MCF 10A (cell line): ENCODE measurements at regions of chr4 and their contacts with region 1.

Region 1: DNA sequence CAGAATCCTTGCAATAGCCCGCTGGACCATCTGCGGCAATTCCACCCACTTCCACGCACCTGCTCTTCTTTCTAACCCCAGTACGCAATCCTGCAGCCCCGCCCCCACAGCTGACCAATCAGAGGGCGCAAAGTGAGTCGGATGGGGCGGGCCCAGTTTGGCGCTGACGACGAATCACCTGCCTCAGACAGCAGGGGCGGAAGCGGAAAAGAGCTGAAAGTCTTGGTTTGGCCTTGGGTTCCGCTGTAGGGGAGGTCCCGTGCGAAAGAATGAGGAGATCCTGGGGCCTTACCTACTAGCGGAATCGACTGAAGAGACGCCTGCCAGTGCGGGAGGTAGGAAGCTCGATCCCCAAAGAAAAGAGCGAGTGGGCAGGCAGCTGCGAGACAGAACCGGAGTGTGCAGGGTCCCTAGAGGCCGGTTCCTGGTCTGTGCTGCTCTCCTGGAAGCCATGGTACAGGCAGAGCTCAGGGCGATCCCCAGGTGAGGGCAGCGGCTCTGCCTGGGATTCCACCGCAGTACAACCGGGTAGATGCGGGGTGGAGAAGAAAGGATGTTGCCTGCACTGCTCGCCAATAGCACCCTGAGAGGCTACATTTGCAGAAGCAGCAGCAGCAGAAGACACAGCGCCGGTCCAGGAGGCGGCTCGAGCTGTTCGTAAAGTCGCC is at the start of gene TMEM184C:
- DNase-seq: peak; percentile 98
- H3K4me3 Mint-ChIP-seq: peak within 1 kb of the TSS; percentile 82
- H3K27ac Mint-ChIP-seq: peak within 1 kb of the TSS; percentile 86
- H3K4me1 Mint-ChIP-seq: peaks cover 18% of the 10 kb centered on the region
- H3K27me3 Mint-ChIP-seq: no peaks in the 10 kb centered on the region
- CTCF ChIP-seq: no peak
- total RNA-seq, gene TMEM184C: 33.9 and 37.1 TPM in 2 replicates

Region 2: DNA sequence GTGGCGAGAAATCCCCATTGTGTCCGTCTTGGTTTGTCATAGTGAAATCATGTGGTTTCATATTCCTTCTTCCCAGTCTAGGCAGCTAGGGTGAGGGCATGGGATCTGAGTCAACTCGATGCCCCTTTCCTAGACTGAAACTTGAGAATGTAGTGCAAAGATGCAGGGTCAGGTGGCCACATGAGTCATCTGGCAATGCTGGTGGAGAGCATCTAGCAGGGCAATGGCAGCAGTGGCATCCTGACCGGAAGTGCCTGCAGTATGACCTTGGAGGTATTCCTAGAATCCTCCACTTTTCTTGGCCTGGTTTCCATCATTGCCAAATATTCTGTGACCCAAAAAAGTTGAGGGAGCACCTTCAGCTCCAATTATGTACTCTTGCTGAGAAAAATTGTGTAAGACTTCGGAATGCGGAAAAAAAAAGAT is 39.2 kb before region 1 on chr4:
- CTCF ChIA-PET with region 1: no interaction called
- POLR2A ChIA-PET with region 1: interaction called, 12 read pairs
- intact Hi-C with region 1: no loop called
- DNase-seq: peak; percentile 99
- H3K4me3 Mint-ChIP-seq: peak overlapping the region; percentile 17
- H3K27ac Mint-ChIP-seq: peak overlapping the region; percentile 76
- H3K4me1 Mint-ChIP-seq: peaks cover 42% of the 10 kb centered on the region
- H3K27me3 Mint-ChIP-seq: no peaks in the 10 kb centered on the region
- CTCF ChIP-seq: no peak

Region 3: DNA sequence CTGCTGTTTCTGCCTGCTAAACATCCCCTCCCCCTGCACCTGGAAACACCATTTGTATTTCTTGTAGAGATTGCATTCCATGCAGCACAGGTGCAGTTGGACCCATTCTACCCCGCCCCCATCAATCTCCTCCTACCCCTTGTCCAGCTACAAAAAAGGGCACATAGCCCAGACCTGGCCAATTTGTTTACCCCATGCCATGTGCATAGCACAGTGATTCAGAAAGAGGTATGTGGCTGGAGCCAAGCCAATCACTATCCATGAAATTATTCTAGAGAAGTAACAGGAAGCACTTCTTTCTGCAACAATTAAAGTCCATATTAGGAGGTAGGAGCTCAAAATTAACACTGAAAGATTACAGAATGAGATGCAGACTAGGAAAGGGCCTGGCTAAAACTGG is 20.3 kb before region 1 on chr4:
- CTCF ChIA-PET with region 1: interaction called, 5 read pairs
- POLR2A ChIA-PET with region 1: interaction called, 51 read pairs
- intact Hi-C with region 1: no loop called
- DNase-seq: peak; percentile 94
- H3K4me3 Mint-ChIP-seq: no peak overlapping the region
- H3K27ac Mint-ChIP-seq: peak overlapping the region; percentile 97
- H3K4me1 Mint-ChIP-seq: peaks cover 35% of the 10 kb centered on the region
- H3K27me3 Mint-ChIP-seq: no peaks in the 10 kb centered on the region
- CTCF ChIP-seq: no peak

Region 4: GRCh38 chr4:147633113-147633512 is 15.8 kb after region 1 on chr4:
- CTCF ChIA-PET with region 1: no interaction called
- POLR2A ChIA-PET with region 1: interaction called, 31 read pairs
- intact Hi-C with region 1: no loop called
- DNase-seq: no peak
- H3K4me3 Mint-ChIP-seq: no peak overlapping the region
- H3K27ac Mint-ChIP-seq: peak overlapping the region; percentile 66
- H3K4me1 Mint-ChIP-seq: no peaks in the 10 kb centered on the region
- H3K27me3 Mint-ChIP-seq: no peaks in the 10 kb centered on the region
- CTCF ChIP-seq: no peak

Region 5: DNA sequence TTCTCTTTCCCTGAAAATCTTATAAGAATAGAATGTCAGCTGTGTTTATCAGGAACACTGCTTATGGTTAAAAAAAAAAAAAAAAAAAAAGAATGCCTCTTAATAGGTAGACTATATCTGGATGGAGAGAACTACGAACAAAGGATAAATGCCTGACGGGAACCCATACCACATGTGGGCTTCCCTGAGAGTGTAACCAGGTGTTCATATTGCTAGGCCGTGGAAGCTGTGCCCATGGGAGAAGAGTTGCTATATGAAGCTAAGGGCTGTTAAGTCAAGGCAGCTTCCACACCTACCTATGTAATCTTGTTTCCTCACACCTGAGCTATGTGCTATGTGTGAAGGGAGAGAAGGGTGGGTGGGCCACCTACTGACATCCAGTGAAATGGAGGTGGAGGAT is 27.2 kb after region 1 on chr4:
- CTCF ChIA-PET with region 1: interaction called, 3 read pairs
- POLR2A ChIA-PET with region 1: interaction called, 10 read pairs
- intact Hi-C with region 1: no loop called
- DNase-seq: no peak
- H3K4me3 Mint-ChIP-seq: no peak overlapping the region
- H3K27ac Mint-ChIP-seq: no peak overlapping the region
- H3K4me1 Mint-ChIP-seq: peaks cover 10% of the 10 kb centered on the region
- H3K27me3 Mint-ChIP-seq: no peaks in the 10 kb centered on the region
- CTCF ChIP-seq: no peak

Region 6: GRCh38 chr4:147683717-147684700 is 66.7 kb after region 1 on chr4 and contains the start of gene PRMT9:
- CTCF ChIA-PET with region 1: no interaction called
- POLR2A ChIA-PET with region 1: interaction called, 48 read pairs
- intact Hi-C with region 1: no loop called
- DNase-seq: peak; percentile 87
- H3K4me3 Mint-ChIP-seq: peak within 1 kb of the TSS; percentile 88
- H3K27ac Mint-ChIP-seq: peak within 1 kb of the TSS; percentile 89
- H3K4me1 Mint-ChIP-seq: peaks cover 11% of the 10 kb centered on the region
- H3K27me3 Mint-ChIP-seq: no peaks in the 10 kb centered on the region
- CTCF ChIP-seq: no peak
- total RNA-seq, gene PRMT9: 6.1 and 8.4 TPM in 2 replicates

Region 7: GRCh38 chr4:147822128-147822527 is 204.8 kb after region 1 on chr4:
- CTCF ChIA-PET with region 1: no interaction called
- POLR2A ChIA-PET with region 1: interaction called, 10 read pairs
- intact Hi-C with region 1: no loop called
- DNase-seq: peak; percentile 99
- H3K4me3 Mint-ChIP-seq: peak overlapping the region; percentile 54
- H3K27ac Mint-ChIP-seq: peak overlapping the region; percentile 81
- H3K4me1 Mint-ChIP-seq: peaks cover 53% of the 10 kb centered on the region
- H3K27me3 Mint-ChIP-seq: no peaks in the 10 kb centered on the region
- CTCF ChIP-seq: no peak

Region 8: DNA sequence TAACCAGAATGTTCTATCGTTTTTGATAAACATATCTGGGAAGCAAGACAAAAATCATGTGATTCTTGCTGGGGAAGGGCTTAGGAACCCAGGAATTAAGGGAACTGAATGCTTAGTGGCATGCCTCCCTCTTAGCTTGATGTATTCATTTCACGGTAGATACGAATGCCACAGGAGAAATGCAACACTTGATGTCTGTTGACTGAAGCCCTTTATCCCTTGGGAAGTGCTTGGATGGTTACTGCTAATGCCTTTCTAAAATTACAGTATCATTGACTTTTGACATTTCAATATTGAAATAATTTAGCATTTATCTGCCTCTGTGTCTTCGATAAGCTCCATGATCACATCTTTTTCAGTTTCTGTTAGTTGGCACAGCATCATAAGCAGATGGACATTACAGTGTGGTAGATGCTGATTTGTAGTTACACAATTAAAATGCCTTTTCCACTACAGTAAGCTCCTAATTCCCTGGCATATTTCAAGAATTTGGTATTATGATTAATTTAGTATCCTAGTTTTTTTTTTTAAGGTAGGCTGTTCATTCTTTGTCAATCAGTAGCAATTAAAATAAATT is 341.3 kb after region 1 on chr4:
- CTCF ChIA-PET with region 1: no interaction called
- POLR2A ChIA-PET with region 1: no interaction called
- intact Hi-C with region 1: no loop called
- DNase-seq: no peak
- H3K4me3 Mint-ChIP-seq: no peak overlapping the region
- H3K27ac Mint-ChIP-seq: no peak overlapping the region
- H3K4me1 Mint-ChIP-seq: peaks cover 4% of the 10 kb centered on the region
- H3K27me3 Mint-ChIP-seq: no peaks in the 10 kb centered on the region
- CTCF ChIP-seq: no peak